Caco-2 (cell line): ENCODE measurements at regions of chr14 and their contacts with region 1.

Region 1: GRCh38 chr14:22556990-22557623 is 31.9 kb downstream of the DAD1 start:
- DNase-seq: peak; percentile 86 to 90
- H3K4me3 ChIP-seq: peak overlapping the region; percentile 21
- H3K4me3 Mint-ChIP-seq: peak overlapping the region; percentile 47
- H3K27ac Mint-ChIP-seq: peak overlapping the region; percentile 95
- H3K4me1 ChIP-seq: peaks cover 53% of the 10 kb centered on the region
- H3K4me1 Mint-ChIP-seq: peaks cover 42% of the 10 kb centered on the region
- H3K27me3 ChIP-seq: no peaks in the 10 kb centered on the region
- H3K27me3 Mint-ChIP-seq: no peaks in the 10 kb centered on the region
- CTCF ChIP-seq: peak; percentile 86 to 99

Region 2: DNA sequence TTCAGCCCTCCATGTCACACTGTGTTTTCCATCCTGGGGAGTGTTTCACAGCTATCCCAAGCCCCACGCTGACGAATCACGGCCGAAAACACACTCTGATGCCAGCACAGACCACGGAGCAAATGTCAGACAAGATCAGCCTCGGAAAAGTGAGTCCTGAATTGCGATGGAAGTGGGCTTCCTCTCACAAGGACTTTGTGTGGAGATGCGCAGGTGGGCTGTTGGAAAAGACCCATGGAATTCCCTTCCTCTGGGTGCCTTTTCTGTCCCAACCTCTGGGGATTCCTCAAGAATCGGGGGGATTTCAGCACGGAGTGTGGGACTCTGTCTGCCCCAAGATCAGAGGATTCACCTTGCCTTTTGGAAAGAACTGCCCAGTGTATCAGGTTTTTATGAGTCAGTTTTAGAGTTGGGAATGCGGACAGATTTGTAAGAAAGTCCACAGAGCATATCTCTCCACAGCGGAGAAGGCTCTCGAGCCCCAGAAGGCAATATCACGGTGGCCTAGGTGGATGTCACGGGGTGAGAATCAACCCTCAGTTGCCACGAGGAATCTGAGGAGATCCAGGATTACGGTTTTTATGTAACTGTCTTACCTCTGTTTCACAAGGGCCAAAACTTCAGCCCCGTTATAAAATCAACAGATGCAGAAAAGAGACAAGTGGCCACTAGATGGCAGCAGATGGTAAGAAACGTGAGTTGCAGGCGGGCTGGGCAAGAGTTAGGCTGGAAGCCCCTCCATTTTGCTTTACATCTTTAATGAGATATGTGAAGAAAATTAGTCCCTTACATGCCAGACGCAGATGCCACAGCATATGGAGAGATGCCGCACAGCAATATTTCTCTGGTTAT is 170.0 kb before region 1 on chr14:
- CTCF ChIA-PET with region 1: no interaction called
- POLR2A ChIA-PET with region 1: no interaction called
- intact Hi-C with region 1: no loop called
- DNase-seq: peak; percentile 67 to 77
- H3K4me3 ChIP-seq: no peak overlapping the region
- H3K4me3 Mint-ChIP-seq: no peak overlapping the region
- H3K27ac Mint-ChIP-seq: peak overlapping the region; percentile 38
- H3K4me1 ChIP-seq: peaks cover 66% of the 10 kb centered on the region
- H3K4me1 Mint-ChIP-seq: peaks cover 54% of the 10 kb centered on the region
- H3K27me3 ChIP-seq: no peaks in the 10 kb centered on the region
- H3K27me3 Mint-ChIP-seq: no peaks in the 10 kb centered on the region
- CTCF ChIP-seq: peak; percentile 64 to 69

Region 3: GRCh38 chr14:22579236-22579635 is 22.1 kb after region 1 on chr14:
- CTCF ChIA-PET with region 1: no interaction called
- POLR2A ChIA-PET with region 1: no interaction called
- intact Hi-C with region 1: no loop called
- DNase-seq: no peak
- H3K4me3 ChIP-seq: no peak overlapping the region
- H3K4me3 Mint-ChIP-seq: no peak overlapping the region
- H3K27ac Mint-ChIP-seq: no peak overlapping the region
- H3K4me1 ChIP-seq: no peaks in the 10 kb centered on the region
- H3K4me1 Mint-ChIP-seq: peaks cover 30% of the 10 kb centered on the region
- H3K27me3 ChIP-seq: no peaks in the 10 kb centered on the region
- H3K27me3 Mint-ChIP-seq: no peaks in the 10 kb centered on the region
- CTCF ChIP-seq: no peak

Region 4: DNA sequence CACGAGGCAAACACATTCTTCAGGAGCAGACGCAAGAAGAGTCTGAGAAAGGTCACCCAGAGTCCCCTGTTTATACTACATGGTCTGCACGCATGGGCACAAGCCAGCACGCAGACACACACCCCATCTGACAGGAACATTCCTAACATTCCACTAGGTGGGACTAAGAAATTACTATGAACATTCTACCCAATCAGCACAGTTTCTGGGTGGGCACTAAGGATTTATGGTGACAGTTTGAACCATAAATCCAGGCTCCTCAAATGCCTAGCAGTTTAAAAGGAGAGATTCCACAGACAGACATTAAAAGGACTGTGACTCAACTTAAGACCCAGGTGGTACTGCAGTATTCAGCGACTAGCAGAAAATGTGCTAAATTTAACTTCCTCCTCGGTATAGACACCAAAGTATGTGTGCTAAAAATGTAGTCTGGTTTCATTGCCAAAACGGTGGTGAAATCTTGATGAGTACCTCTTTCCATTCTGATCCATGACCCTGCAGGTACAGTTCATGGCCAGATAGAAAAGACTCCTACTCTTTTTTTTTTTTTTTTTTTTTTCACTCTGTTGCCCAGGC is 57.2 kb after region 1 on chr14:
- CTCF ChIA-PET with region 1: no interaction called
- POLR2A ChIA-PET with region 1: no interaction called
- intact Hi-C with region 1: loop called (anchors 2 kb)
- DNase-seq: peak; percentile 88 to 94
- H3K4me3 ChIP-seq: no peak overlapping the region
- H3K4me3 Mint-ChIP-seq: peak overlapping the region; percentile 46
- H3K27ac Mint-ChIP-seq: peak overlapping the region; percentile 99
- H3K4me1 ChIP-seq: peaks cover 28% of the 10 kb centered on the region
- H3K4me1 Mint-ChIP-seq: peaks cover 26% of the 10 kb centered on the region
- H3K27me3 ChIP-seq: no peaks in the 10 kb centered on the region
- H3K27me3 Mint-ChIP-seq: no peaks in the 10 kb centered on the region
- CTCF ChIP-seq: no peak

Region 5: GRCh38 chr14:22653012-22653621 is 96.0 kb after region 1 on chr14:
- CTCF ChIA-PET with region 1: interaction called, 9 read pairs
- POLR2A ChIA-PET with region 1: no interaction called
- intact Hi-C with region 1: loop called (anchors 1 kb)
- DNase-seq: peak; percentile 85 to 86
- H3K4me3 ChIP-seq: no peak overlapping the region
- H3K4me3 Mint-ChIP-seq: no peak overlapping the region
- H3K27ac Mint-ChIP-seq: peak overlapping the region; percentile 68
- H3K4me1 ChIP-seq: peaks cover 31% of the 10 kb centered on the region
- H3K4me1 Mint-ChIP-seq: peaks cover 12% of the 10 kb centered on the region
- H3K27me3 ChIP-seq: no peaks in the 10 kb centered on the region
- H3K27me3 Mint-ChIP-seq: no peaks in the 10 kb centered on the region
- CTCF ChIP-seq: peak; percentile 80 to 91

Region 6: DNA sequence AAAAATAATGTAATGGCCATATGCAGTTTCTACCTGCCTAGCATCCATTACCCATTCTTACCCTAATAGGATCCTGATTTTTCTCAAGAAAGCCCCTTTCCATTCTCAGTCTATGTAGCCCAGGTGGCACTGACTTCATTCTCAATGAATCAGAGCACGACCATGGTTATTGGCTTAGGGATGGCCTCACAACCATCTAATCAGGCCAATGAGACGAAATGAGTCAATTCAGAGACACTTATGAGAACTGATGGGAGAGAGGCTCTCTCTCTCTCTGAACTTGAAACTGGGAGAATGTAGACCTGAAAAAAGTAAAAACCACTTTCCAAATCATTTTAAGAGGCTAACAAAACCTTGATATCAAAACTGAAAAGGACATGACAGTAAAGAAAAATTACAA is 164.1 kb after region 1 on chr14:
- CTCF ChIA-PET with region 1: no interaction called
- POLR2A ChIA-PET with region 1: no interaction called
- intact Hi-C with region 1: no loop called
- DNase-seq: no peak
- H3K4me3 ChIP-seq: no peak overlapping the region
- H3K4me3 Mint-ChIP-seq: no peak overlapping the region
- H3K27ac Mint-ChIP-seq: no peak overlapping the region
- H3K4me1 ChIP-seq: no peaks in the 10 kb centered on the region
- H3K4me1 Mint-ChIP-seq: no peaks in the 10 kb centered on the region
- H3K27me3 ChIP-seq: no peaks in the 10 kb centered on the region
- H3K27me3 Mint-ChIP-seq: no peaks in the 10 kb centered on the region
- CTCF ChIP-seq: no peak

Region 7: DNA sequence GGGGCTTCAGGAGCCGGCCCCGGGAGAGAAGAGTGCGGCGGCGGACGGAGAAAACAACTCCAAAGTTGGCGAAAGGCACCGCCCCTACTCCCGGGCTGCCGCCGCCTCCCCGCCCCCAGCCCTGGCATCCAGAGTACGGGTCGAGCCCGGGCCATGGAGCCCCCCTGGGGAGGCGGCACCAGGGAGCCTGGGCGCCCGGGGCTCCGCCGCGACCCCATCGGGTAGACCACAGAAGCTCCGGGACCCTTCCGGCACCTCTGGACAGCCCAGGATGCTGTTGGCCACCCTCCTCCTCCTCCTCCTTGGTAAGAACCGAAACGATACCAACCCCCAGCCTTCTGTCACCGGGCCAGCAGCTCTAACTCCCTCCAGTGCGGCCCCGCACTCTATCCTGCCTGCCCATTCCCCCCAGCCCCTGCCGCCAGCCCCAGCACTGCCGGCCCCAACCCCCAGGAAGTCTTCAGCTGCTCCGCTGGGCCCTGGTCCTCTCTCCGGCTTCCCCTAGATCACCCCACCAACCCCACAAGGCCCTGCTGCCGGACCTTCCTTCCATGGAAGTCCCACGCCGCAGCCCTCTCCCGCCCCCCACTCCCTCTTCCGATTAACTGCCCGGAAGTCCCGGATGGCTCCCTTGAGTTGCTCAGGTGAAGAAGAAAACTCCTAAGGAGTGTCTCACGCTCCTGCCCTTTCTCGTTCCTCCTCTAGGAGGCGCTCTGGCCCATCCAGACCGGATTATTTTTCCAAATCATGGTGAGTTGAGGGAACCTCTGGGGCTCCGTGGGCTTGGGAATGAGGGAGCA is 315.1 kb after region 1 on chr14:
- CTCF ChIA-PET with region 1: no interaction called
- POLR2A ChIA-PET with region 1: no interaction called
- intact Hi-C with region 1: loop called (anchors 5 kb)
- DNase-seq: peak; percentile 82 to 86
- H3K4me3 ChIP-seq: peak overlapping the region; percentile 91
- H3K4me3 Mint-ChIP-seq: peak overlapping the region; percentile 82
- H3K27ac Mint-ChIP-seq: peak overlapping the region; percentile 92
- H3K4me1 ChIP-seq: peaks cover 9% of the 10 kb centered on the region; the same call in 1 of the 2 replicates
- H3K4me1 Mint-ChIP-seq: peaks cover 8% of the 10 kb centered on the region
- H3K27me3 ChIP-seq: no peaks in the 10 kb centered on the region
- H3K27me3 Mint-ChIP-seq: no peaks in the 10 kb centered on the region
- CTCF ChIP-seq: peak; percentile 86 to 89

Region 8: GRCh38 chr14:22973217-22974032 is 416.3 kb after region 1 on chr14:
- CTCF ChIA-PET with region 1: interaction called, 3 read pairs
- POLR2A ChIA-PET with region 1: no interaction called
- intact Hi-C with region 1: loop called (anchors 5 kb)
- DNase-seq: peak; percentile 58 to 76
- H3K4me3 ChIP-seq: no peak overlapping the region
- H3K4me3 Mint-ChIP-seq: peak overlapping the region; percentile 27
- H3K27ac Mint-ChIP-seq: peak overlapping the region; percentile 84
- H3K4me1 ChIP-seq: peaks cover 49% of the 10 kb centered on the region
- H3K4me1 Mint-ChIP-seq: peaks cover 45% of the 10 kb centered on the region
- H3K27me3 ChIP-seq: no peaks in the 10 kb centered on the region
- H3K27me3 Mint-ChIP-seq: no peaks in the 10 kb centered on the region
- CTCF ChIP-seq: peak; percentile 70 to 71